ENCODE measurements at regions of chr19 and their contacts with region 1.

Region 1: GRCh38 chr19:50556282-50557008 is 11.8 kb downstream of the LRRC4B start:
- DNase-seq: peak; percentile 88 to 98
- ATAC-seq: peak; percentile 78 to 92
- H3K4me3 ChIP-seq: peak overlapping the region; percentile 64
- H3K27ac ChIP-seq: peak overlapping the region; percentile 80 to 89
- H3K4me1 ChIP-seq: peaks cover 14% of the 10 kb centered on the region
- CTCF ChIP-seq: peak; percentile 100
- EP300 ChIP-seq: no peak
- POLR2A ChIP-seq: peak; percentile 38
- RAD21 ChIP-seq: peak; percentile 44 to 61

Region 2: DNA sequence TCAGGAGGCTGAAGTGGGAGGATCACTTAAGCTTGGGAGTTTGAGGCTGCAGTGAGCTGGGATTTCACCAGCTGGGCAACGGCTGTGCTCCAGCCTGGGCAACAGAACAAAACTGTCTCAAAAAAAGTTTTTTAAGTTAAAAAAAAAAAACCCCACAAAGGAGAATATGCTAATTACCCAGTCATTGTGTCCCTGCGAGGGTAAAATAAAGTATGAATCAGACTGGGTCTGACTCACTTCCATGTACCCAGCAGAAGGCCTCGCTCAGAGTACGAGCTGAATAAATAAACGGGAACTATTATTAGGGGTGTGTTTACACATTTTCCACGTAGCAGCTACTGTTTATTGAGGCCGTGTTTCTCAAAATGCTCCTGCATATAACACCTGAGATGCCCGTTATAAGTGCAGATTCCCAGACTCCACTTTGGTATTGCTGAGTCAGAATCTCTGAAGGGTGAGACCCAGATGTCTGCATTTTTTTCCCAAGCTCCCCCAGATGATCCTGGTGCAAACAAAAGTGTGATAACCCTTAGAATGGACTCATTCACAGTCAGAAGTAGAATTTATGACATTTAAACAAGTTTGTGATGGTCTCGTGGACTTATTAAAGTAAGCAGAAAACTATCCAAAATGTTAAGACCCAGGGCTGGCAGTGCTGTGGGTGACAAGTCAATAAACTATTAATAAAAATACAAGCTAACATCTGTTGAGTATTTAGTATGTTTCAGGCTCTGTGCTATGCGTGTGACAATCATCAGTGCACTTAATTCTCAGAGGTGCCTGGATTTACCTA is 255.4 kb before region 1 on chr19:
- CTCF ChIA-PET with region 1: no interaction called
- POLR2A ChIA-PET with region 1: no interaction called
- DNase-seq: peak; percentile 81
- ATAC-seq: peak; percentile 98 to 99
- H3K4me3 ChIP-seq: no peak overlapping the region
- H3K27ac ChIP-seq: peak overlapping the region; percentile 38 to 54; a peak in 4 of 6 replicates
- H3K4me1 ChIP-seq: peaks cover 19% of the 10 kb centered on the region
- CTCF ChIP-seq: no peak
- EP300 ChIP-seq: no peak
- POLR2A ChIP-seq: no peak
- RAD21 ChIP-seq: no peak

Region 3: DNA sequence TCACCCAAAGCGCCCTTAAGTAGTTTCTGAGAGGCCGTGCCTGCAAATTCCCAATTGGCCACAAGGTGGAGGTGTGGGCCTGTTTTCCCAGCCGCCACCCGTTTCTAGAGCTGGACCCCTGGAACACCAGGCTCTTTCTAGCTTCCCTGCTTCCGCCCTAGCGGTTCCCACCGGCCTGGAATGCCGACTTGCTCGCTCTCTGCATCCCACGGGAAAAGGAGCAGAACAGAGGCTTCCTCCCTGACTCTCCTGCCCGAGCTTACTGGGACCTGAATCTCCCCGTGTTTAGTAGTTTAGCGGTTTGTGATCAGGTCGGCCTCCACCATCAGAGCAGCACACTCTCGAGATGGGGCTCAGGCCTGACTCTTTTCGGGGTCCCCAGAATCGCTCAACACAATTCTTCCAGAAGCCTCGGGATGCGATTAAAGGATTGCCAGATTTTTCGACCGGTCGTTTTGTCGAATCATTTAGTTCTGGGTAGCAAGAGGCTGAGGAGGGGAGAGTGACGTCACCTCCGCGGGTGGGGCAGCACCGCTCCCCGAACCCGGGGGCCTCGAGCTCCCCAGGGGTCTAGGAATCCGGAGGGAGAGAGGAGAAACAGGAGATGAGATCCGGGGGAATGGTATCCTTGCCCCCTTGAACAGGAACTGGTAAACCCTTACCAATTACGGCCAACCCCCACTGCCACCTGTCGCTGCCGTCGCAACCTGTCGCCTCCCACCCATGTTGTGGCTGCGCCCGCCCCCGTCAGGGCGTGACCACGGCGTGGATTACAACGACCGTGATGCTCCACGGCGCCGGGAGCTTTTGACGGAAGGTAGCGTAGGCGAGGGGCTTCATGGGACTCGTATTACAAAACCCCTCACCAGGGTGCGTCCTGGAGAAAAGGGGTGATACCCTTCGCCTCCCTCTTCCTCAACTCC is 199.0 kb before region 1 on chr19:
- CTCF ChIA-PET with region 1: interaction called, 12 read pairs
- POLR2A ChIA-PET with region 1: interaction called, 3 read pairs
- DNase-seq: peak; percentile 68 to 82
- ATAC-seq: peak; percentile 84 to 89
- H3K4me3 ChIP-seq: peak overlapping the region; percentile 48
- H3K27ac ChIP-seq: peak overlapping the region; percentile 73 to 79
- H3K4me1 ChIP-seq: no peaks in the 10 kb centered on the region
- CTCF ChIP-seq: peak; percentile 90
- EP300 ChIP-seq: no peak
- POLR2A ChIP-seq: no peak
- RAD21 ChIP-seq: peak; percentile 90 to 93

Region 4: DNA sequence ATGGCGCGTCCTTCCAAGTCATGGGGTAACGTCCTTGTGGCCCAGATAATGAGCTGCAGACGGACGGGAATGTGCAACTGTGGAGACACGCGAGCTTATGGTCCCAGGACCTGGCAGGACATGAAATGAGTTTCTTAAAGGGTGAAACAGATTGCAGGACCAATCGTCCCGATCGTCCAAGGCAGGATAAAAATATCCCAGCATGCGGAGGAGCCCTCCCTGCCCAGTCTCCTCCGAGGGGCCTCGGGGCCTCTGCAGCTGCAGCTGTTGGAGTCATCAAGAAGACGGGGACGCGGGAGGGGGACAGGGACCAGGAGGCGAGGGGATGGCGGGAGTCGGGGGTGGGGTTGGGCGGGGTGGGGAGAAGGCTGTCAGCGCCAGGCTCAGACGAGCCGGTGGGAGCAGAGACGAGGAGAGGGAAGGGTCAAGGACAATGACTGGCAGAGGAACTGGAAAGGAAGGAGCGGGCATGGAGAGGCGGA is 65.4 kb before region 1 on chr19:
- CTCF ChIA-PET with region 1: no interaction called
- POLR2A ChIA-PET with region 1: no interaction called
- DNase-seq: no peak
- ATAC-seq: no peak
- H3K4me3 ChIP-seq: no peak overlapping the region
- H3K27ac ChIP-seq: no peak overlapping the region
- H3K4me1 ChIP-seq: peaks cover 9% of the 10 kb centered on the region; the same call in 2 of the 3 replicates
- CTCF ChIP-seq: no peak
- EP300 ChIP-seq: no peak
- POLR2A ChIP-seq: no peak
- RAD21 ChIP-seq: no peak

Region 5: DNA sequence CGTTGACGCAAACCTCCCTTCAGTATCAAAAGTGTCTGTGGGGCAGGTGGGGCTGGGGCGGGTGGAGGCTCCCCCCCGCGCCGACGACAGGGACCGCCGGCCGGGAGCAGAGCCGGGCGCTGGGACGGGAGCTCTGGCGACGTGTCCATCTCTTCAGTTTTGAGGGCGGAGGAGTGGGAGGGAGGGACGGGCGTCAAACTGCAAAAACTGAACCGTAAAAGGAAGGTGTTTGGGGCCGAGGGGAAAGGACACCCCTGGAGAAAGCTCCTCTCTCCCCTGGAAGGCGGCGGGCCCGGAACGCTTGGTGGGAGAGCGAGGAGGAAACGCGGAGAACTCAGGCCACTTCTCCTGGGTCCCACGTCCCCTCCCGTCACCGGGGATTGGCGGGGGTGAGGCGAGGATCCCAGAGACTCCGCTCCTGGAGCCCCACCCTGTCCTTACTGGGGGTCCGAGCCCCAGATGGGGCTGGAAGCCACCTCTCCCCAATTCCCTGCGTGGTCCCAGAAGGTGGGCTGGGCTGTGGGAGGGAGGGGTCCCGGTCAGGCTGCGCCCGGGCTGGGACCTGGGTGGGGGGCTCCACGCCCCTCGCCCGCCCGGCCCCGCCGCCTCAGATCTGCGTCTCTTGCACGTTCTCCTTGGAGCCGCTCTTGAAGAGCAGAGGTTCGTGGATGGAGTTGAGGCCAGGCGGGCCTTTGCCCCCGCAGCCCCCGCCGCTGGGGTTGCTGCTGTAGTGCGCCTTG is 39.3 kb before region 1 on chr19:
- CTCF ChIA-PET with region 1: interaction called, 38 read pairs
- POLR2A ChIA-PET with region 1: no interaction called
- DNase-seq: peak in 1 of 2 experiments; percentile 47
- ATAC-seq: peak in 1 of 2 experiments; percentile 7; a peak in 3 of 6 replicates
- H3K4me3 ChIP-seq: peak overlapping the region; percentile 13; the same call in 1 of the 3 replicates
- H3K27ac ChIP-seq: peak overlapping the region; percentile 5 to 59; a peak in 3 of 6 replicates
- H3K4me1 ChIP-seq: peaks cover 10% of the 10 kb centered on the region; the same call in 1 of the 3 replicates
- CTCF ChIP-seq: no peak
- EP300 ChIP-seq: no peak
- POLR2A ChIP-seq: no peak
- RAD21 ChIP-seq: no peak

Region 6: GRCh38 chr19:50568321-50569075 is 12.1 kb after region 1 on chr19 and contains the start of gene LRRC4B:
- CTCF ChIA-PET with region 1: interaction called, 98 read pairs
- POLR2A ChIA-PET with region 1: no interaction called
- DNase-seq: no peak
- ATAC-seq: no peak
- H3K4me3 ChIP-seq: peak within 1 kb of the TSS; percentile 55
- H3K27ac ChIP-seq: peak within 1 kb of the TSS; percentile 63 to 81; a peak in 5 of 6 replicates
- H3K4me1 ChIP-seq: peaks cover 19% of the 10 kb centered on the region
- CTCF ChIP-seq: no peak
- EP300 ChIP-seq: no peak
- POLR2A ChIP-seq: no peak
- RAD21 ChIP-seq: no peak
- polyA plus RNA-seq, gene LRRC4B: 0.49 and 0.54 TPM in 2 replicates

Region 7: DNA sequence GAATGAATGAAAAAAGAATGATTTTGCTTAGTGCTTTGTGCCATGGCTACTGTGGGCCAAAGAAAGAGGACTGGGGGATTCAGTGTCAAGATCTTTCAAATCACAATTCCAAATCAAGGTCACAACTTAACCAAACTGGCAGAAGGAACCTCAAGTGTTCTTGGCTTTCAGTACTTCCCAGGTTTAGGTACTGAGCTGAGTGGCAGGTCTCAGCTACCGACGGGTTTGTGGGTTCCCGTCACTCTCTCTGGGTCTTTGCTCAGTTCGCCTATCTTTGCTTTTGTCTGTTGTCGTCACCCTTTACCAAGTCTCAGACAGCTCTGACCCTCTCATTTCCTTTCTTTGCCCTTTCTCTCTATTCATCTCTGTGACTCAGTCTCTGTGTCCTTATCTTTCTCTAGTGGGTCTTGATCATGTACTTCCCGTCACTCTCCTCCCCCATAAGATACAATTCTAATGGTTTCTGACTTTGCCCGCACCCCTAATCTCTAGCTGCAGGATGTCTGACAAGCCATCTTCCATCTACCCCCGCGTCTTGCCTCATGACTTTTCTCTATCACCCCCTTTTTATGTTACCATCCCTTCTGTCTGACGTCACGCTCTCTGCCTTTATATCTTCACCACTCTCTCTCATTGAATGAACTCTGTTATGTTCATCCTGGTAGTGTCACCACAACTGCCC is 45.1 kb after region 1 on chr19:
- CTCF ChIA-PET with region 1: interaction called, 28 read pairs
- POLR2A ChIA-PET with region 1: no interaction called
- DNase-seq: no peak
- ATAC-seq: no peak
- H3K4me3 ChIP-seq: no peak overlapping the region
- H3K27ac ChIP-seq: no peak overlapping the region
- H3K4me1 ChIP-seq: no peaks in the 10 kb centered on the region
- CTCF ChIP-seq: no peak
- EP300 ChIP-seq: no peak
- POLR2A ChIP-seq: no peak
- RAD21 ChIP-seq: no peak

Region 8: GRCh38 chr19:50669302-50670101 is 113.1 kb after region 1 on chr19:
- CTCF ChIA-PET with region 1: interaction called, 10 read pairs
- POLR2A ChIA-PET with region 1: no interaction called
- DNase-seq: peak; percentile 61 to 69
- ATAC-seq: peak; percentile 48 to 63; a peak in 5 of 6 replicates
- H3K4me3 ChIP-seq: no peak overlapping the region; the same call in 2 of the 3 replicates
- H3K27ac ChIP-seq: no peak overlapping the region
- H3K4me1 ChIP-seq: peaks cover 23% of the 10 kb centered on the region
- CTCF ChIP-seq: peak; percentile 91
- EP300 ChIP-seq: no peak
- POLR2A ChIP-seq: no peak
- RAD21 ChIP-seq: peak; percentile 53 to 65

Region 9: DNA sequence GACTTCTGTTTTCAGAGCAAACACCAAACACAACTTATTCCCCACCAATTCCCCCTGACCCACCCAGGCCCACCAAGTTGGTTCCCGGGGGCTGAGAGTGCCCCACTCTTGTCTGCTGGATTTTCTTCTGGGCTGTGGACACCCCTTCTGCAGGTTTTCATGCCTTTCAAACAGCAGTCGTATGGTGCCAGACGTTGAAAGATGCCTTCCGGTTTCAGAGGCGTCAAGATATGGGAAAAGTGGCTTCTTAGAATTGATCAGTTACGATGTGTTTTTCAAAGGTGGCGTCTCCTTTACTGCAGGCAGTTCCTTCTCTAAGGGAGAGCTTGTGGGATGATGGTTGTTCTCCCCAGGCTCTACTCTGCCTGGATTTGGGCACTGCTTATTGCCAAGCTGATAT is 179.4 kb after region 1 on chr19:
- CTCF ChIA-PET with region 1: no interaction called
- POLR2A ChIA-PET with region 1: no interaction called
- DNase-seq: no peak
- ATAC-seq: no peak
- H3K4me3 ChIP-seq: no peak overlapping the region
- H3K27ac ChIP-seq: no peak overlapping the region
- H3K4me1 ChIP-seq: no peaks in the 10 kb centered on the region
- CTCF ChIP-seq: no peak
- EP300 ChIP-seq: no peak
- POLR2A ChIP-seq: no peak
- RAD21 ChIP-seq: no peak

Measured in A549 (cell line).